Heart right ventricle (tissue), 16 donors: ENCODE measurements at regions of chr14 and their contacts with region 1.

Region 1: GRCh38 chr14:101953151-101953550 is 11.2 kb upstream of the DYNC1H1 start:
- DNase-seq: no peak
- ATAC-seq: no peak
- H3K4me3 ChIP-seq: no peak overlapping the region
- H3K27ac ChIP-seq: no peak overlapping the region
- H3K4me1 ChIP-seq: peaks cover 3 to 23% (median 17%) of the 10 kb centered on the region in 9 donors
- H3K27me3 ChIP-seq: no peaks in the 10 kb centered on the region
- CTCF ChIP-seq: no peak

Region 2: GRCh38 chr14:101716956-101717662 is 236.0 kb before region 1 on chr14:
- intact Hi-C with region 1: loop called in 1 of 10 experiments (anchors 10 kb)
- DNase-seq: no peak
- ATAC-seq: no peak
- H3K4me3 ChIP-seq: no peak overlapping the region
- H3K27ac ChIP-seq: no peak overlapping the region
- H3K4me1 ChIP-seq: peaks cover 2 to 31% (median 18%) of the 10 kb centered on the region in 9 donors
- H3K27me3 ChIP-seq: no peaks in the 10 kb centered on the region
- CTCF ChIP-seq: no peak

Region 3: GRCh38 chr14:101839236-101839635 is 113.9 kb before region 1 on chr14:
- intact Hi-C with region 1: no loop called
- DNase-seq: no peak
- ATAC-seq: no peak
- H3K4me3 ChIP-seq: no peak overlapping the region
- H3K27ac ChIP-seq: peak overlapping the region in 1 of 10 donors; percentile 3
- H3K4me1 ChIP-seq: peaks cover 19 to 80% (median 69%) of the 10 kb centered on the region in 9 donors
- H3K27me3 ChIP-seq: no peaks in the 10 kb centered on the region
- CTCF ChIP-seq: no peak

Region 4: DNA sequence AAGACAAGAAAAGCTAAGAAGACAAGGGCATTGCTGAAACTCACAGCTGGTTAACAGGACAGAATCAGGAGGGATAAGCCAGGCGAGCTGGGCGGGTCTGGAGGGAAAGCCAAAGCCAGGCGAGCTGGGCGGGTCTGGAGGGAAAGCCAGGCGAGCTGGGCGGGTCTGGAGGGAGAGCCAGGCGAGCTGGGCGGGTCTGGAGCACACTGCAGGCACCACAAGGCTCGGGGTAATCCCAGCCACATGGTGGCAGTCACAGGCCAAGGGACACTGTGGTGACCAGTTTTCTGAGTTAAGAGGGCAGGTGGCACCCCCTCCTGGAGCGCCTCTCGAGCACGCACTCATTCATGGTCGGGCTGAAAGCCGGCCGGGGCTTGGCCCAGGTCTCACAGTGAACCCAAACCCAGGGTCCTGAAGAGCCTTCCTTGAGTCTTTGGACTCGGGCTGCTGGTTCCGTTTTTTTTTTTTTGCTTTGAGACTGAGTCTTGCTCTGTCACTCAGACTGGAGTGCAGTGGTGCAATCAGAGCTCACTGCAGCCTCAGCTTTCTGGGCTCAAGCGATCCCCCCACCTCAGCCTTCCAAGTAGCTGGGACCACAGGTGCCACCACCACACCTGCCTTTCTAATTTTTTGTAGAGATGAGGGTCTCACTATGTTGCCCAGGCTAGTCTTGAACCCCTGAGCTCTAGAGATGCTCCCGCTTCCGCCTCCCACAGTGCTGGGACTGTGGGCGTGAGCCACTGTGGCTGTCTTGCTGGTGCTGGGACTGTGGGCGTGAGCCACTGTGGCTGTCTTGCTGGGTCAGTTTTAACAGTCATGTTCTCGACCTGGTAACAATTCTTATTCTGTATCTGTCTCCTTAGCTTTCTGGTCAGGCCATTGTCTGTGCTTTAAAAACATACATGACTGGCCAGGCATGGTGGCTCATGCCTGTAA is 93.5 kb after region 1 on chr14:
- intact Hi-C with region 1: no loop called
- DNase-seq: peak; percentile 81 to 86
- ATAC-seq: peak; percentile 86 to 94 (median 91)
- H3K4me3 ChIP-seq: no peak overlapping the region
- H3K27ac ChIP-seq: peak overlapping the region in 5 of 10 donors; percentile 19 to 58 (median 39)
- H3K4me1 ChIP-seq: peaks cover 0 to 41% (median 27%) of the 10 kb centered on the region in 9 donors
- H3K27me3 ChIP-seq: no peaks in the 10 kb centered on the region
- CTCF ChIP-seq: peak; percentile 28 to 74 (median 50)